AG04449 (cell line): ENCODE measurements at regions of chr2 and their contacts with region 1.

Region 1: DNA sequence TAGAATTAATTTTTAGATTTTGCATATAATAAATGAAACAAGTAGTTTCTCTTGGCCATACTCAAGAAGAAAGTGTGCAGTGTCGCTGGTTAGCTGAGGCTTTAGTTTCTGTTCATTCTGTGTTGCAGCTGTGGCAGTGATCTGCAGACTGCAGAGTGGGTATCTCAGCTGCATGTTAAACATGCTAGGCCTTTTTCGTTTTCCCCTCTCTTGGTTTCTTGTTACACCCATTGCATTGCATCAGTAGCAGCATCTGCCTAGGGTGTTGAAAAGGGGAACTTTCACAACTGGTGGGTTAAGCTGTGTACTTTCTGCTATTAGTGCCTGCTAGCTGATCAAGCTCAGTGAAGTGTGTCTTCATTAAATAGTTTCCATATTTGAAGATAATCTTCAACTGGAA is 51.3 kb downstream of the ACSL3 start:
- DNase-seq: no peak
- H3K4me3 ChIP-seq: no peak overlapping the region
- CTCF ChIP-seq: no peak

Region 2: DNA sequence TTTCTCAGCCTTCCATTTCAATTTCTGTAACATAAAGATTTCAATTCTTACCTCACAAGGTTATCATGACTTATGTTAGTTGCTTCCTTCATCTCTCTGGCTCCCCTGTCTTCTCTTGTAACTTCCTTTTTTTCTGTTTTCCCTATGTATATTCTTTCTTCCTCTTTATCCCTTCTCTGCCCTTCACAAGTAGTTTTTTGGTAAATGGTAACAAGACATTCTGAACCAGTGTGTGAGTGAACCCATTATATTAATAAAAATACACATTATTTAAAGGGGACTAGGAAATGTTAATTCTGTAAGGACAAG is 42.9 kb before region 1 on chr2:
- CTCF ChIA-PET with region 1: no interaction called
- POLR2A ChIA-PET with region 1: no interaction called
- DNase-seq: no peak
- H3K4me3 ChIP-seq: no peak overlapping the region
- CTCF ChIP-seq: no peak

Region 3: GRCh38 chr2:222930862-222931261 is 18.7 kb after region 1 on chr2:
- CTCF ChIA-PET with region 1: interaction called, 19 read pairs
- POLR2A ChIA-PET with region 1: no interaction called
- DNase-seq: no peak
- H3K4me3 ChIP-seq: no peak overlapping the region
- CTCF ChIP-seq: no peak

Region 4: DNA sequence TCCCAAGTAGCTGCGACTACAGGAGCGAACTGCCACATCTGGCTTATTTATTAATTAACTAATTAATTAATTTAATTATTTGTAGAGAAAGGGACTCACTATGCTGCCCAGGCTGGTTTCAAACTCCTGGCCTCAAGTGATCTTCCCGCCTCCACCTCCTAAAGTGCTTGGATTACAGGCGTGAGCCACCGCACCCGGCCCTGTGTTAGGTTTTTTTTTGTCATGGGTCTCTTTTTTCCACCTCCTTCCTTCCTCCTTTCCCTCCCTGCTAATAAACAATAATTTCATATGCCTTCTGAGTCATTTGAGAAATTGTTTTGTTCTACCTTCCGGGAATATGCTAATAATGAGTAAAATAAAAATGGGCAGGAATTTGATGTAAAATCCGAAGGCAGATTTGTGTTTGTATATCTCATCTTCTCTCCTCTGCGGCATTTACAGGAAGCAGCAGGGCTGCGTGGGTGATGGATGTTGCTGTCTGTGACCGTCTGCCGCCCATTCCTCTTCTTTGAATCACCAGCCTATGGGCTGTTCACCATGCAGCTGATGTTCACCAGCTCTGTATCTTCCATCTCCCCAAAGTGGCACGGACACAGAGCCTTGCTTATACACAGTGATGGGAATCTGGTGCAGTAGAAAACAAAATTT is 38.6 kb after region 1 on chr2:
- CTCF ChIA-PET with region 1: interaction called, 24 read pairs
- POLR2A ChIA-PET with region 1: no interaction called
- DNase-seq: peak; percentile 65
- H3K4me3 ChIP-seq: no peak overlapping the region
- CTCF ChIP-seq: no peak

Region 5: GRCh38 chr2:222959336-222959735 is 47.2 kb after region 1 on chr2:
- CTCF ChIA-PET with region 1: interaction called, 45 read pairs
- POLR2A ChIA-PET with region 1: interaction called, 3 read pairs
- DNase-seq: peak; percentile 66
- H3K4me3 ChIP-seq: no peak overlapping the region
- CTCF ChIP-seq: peak; percentile 75